CD4-positive, alpha-beta memory T cell (primary cell): ENCODE measurements at regions of chr1 and their contacts with region 1.

Region 1: DNA sequence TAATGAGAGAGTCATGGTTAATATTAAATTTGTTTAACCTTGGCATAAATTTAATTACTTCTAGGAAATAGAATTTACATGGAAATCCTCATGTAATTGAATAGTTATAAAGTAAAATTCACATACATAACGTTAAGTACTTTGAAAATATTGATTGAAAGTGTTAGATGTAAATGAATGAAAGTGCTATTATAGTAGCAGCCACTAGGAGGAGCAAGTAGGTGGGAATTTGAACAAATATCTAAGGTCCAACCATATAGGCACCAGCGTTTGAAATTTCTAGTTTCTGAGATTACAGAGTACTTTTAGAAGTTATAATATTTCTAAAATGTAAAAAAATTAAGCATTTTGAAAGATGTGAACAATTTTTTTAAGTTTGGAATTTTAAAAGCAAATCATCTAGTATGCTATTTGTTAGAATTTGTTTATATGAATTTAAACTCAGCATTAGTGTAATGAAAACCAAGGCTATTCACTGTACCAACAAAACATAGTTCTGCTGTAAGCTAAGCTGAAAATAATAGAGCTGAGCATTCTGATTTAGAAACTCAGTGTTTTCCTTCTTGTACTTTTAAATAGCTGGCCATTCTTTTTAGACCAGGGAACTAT is 3.3 kb downstream of the B3GALT2 start:
- DNase-seq: peak in 4 of 5 donors; percentile 59 to 64 (median 62)
- H3K4me3 ChIP-seq: peak overlapping the region in 1 of 2 donors; percentile 10
- H3K4me3 Mint-ChIP-seq: peak overlapping the region; percentile 60 to 92 (median 81)
- H3K27ac ChIP-seq: peak overlapping the region; percentile 23
- H3K27ac Mint-ChIP-seq: peak overlapping the region in 4 of 7 donors; percentile 16 to 82 (median 68)
- H3K4me1 ChIP-seq: peaks cover 47% of the 10 kb centered on the region
- H3K4me1 Mint-ChIP-seq: peaks cover 28 to 52% (median 36%) of the 10 kb centered on the region in 4 donors
- H3K27me3 ChIP-seq: no peaks in the 10 kb centered on the region
- H3K27me3 Mint-ChIP-seq: no peaks in the 10 kb centered on the region

Region 2: DNA sequence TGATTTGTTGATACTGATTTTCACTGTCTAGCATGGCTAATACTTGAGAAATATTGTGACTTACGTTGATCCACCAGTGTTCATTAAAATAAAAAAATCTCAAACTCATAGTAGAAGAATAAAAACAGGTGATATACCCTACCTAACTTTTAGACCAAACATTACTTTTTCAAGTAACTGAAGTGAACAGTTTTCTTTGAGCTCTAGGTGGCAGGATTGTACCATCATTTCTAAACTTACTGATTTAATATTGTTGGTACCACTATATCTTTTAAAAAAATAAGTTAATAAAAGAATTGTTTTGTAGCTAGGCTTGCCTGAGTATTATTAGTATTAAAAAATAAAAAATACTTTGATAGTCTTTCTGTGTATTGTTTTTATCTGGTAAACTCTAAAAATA is 39.8 kb before region 1 on chr1:
- CTCF ChIA-PET with region 1: no interaction called
- POLR2A ChIA-PET with region 1: no interaction called
- intact Hi-C with region 1: no loop called
- DNase-seq: peak in 2 of 5 donors; percentile 16 to 20
- H3K4me3 ChIP-seq: no peak overlapping the region
- H3K4me3 Mint-ChIP-seq: no peak overlapping the region
- H3K27ac ChIP-seq: no peak overlapping the region
- H3K27ac Mint-ChIP-seq: peak overlapping the region in 1 of 7 donors; percentile 8
- H3K4me1 ChIP-seq: peaks cover 9% of the 10 kb centered on the region
- H3K4me1 Mint-ChIP-seq: peaks cover 15 to 38% (median 30%) of the 10 kb centered on the region in 4 donors
- H3K27me3 ChIP-seq: no peaks in the 10 kb centered on the region
- H3K27me3 Mint-ChIP-seq: no peaks in the 10 kb centered on the region

Region 3: GRCh38 chr1:193338194-193338593 is 155.1 kb after region 1 on chr1:
- CTCF ChIA-PET with region 1: interaction called, 11 read pairs
- POLR2A ChIA-PET with region 1: no interaction called
- intact Hi-C with region 1: loop called (anchors 5 kb)
- DNase-seq: peak in 1 of 5 donors; percentile 4
- H3K4me3 ChIP-seq: no peak overlapping the region
- H3K4me3 Mint-ChIP-seq: no peak overlapping the region
- H3K27ac ChIP-seq: no peak overlapping the region
- H3K27ac Mint-ChIP-seq: no peak overlapping the region
- H3K4me1 ChIP-seq: no peaks in the 10 kb centered on the region
- H3K4me1 Mint-ChIP-seq: peaks cover 0 to 1% (median 0%) of the 10 kb centered on the region in 4 donors
- H3K27me3 ChIP-seq: no peaks in the 10 kb centered on the region
- H3K27me3 Mint-ChIP-seq: no peaks in the 10 kb centered on the region

Region 4: DNA sequence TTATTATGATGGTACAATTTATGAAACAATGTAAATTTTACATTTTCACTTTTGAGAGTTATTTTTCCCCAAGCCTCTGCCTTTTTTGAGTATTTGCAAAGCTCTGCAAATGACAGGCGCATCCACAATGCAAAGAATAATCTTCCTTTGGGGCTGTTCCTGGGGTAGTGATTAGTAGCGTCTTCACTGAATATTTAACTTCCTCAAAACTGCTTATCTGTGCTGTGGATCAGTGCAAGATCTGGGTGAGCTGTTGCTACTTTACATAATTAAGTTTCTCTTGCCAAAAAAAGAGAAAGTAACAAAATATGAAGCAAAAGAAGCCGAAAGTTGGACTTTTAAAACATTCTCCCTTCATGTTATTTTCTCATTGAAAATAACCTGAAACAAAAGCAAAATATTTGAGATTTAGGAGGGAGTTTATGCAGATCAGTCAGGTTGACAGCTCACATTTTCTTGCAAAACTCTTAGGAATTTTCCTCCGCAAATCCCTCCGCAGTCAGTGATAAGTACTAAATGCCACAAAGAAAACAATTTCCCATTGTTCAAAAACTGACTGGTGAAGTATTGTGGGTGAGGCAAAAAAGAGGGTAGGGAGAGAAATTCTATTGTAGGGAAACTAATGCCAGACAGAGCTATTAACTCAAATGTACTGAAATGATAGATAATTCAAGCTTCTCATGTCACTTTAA is 279.7 kb after region 1 on chr1:
- CTCF ChIA-PET with region 1: interaction called, 3 read pairs
- POLR2A ChIA-PET with region 1: interaction called, 65 read pairs
- intact Hi-C with region 1: loop called (anchors 10 kb)
- DNase-seq: peak; percentile 31 to 59 (median 53)
- H3K4me3 ChIP-seq: peak overlapping the region in 1 of 2 donors; percentile 6
- H3K4me3 Mint-ChIP-seq: peak overlapping the region; percentile 47 to 84 (median 82)
- H3K27ac ChIP-seq: peak overlapping the region; percentile 48
- H3K27ac Mint-ChIP-seq: peak overlapping the region in 6 of 7 donors; percentile 87 to 98 (median 94)
- H3K4me1 ChIP-seq: peaks cover 67% of the 10 kb centered on the region
- H3K4me1 Mint-ChIP-seq: peaks cover 40 to 68% (median 46%) of the 10 kb centered on the region in 4 donors
- H3K27me3 ChIP-seq: no peaks in the 10 kb centered on the region
- H3K27me3 Mint-ChIP-seq: no peaks in the 10 kb centered on the region

Region 5: GRCh38 chr1:194159940-194160339 is 976.8 kb after region 1 on chr1:
- CTCF ChIA-PET with region 1: interaction called, 3 read pairs
- POLR2A ChIA-PET with region 1: no interaction called
- intact Hi-C with region 1: loop called (anchors 10 kb)
- DNase-seq: no peak
- H3K4me3 ChIP-seq: no peak overlapping the region
- H3K4me3 Mint-ChIP-seq: no peak overlapping the region
- H3K27ac ChIP-seq: no peak overlapping the region
- H3K27ac Mint-ChIP-seq: no peak overlapping the region
- H3K4me1 ChIP-seq: no peaks in the 10 kb centered on the region
- H3K4me1 Mint-ChIP-seq: peaks cover 0 to 3% (median under 1%) of the 10 kb centered on the region in 4 donors
- H3K27me3 ChIP-seq: no peaks in the 10 kb centered on the region
- H3K27me3 Mint-ChIP-seq: no peaks in the 10 kb centered on the region

Region 6: GRCh38 chr1:194295685-194296084 is 1112.6 kb after region 1 on chr1:
- CTCF ChIA-PET with region 1: interaction called, 28 read pairs
- POLR2A ChIA-PET with region 1: interaction called, 7 read pairs
- intact Hi-C with region 1: loop called (anchors 1 kb)
- DNase-seq: peak; percentile 48 to 72 (median 68)
- H3K4me3 ChIP-seq: no peak overlapping the region
- H3K4me3 Mint-ChIP-seq: no peak overlapping the region
- H3K27ac ChIP-seq: no peak overlapping the region
- H3K27ac Mint-ChIP-seq: peak overlapping the region; percentile 4 to 69 (median 40)
- H3K4me1 ChIP-seq: peaks cover 12% of the 10 kb centered on the region
- H3K4me1 Mint-ChIP-seq: peaks cover 13 to 16% (median 14%) of the 10 kb centered on the region in 4 donors
- H3K27me3 ChIP-seq: no peaks in the 10 kb centered on the region
- H3K27me3 Mint-ChIP-seq: no peaks in the 10 kb centered on the region